Activated T-helper 1 cell treated with anti-CD3 and anti-CD28 coated beads, Interleukin-12 subunit alpha, Interleukin-12 subunit beta, Interleukin-2, Interleukin-4 antibody, amounts not matched to agents 30 ng/mL and 10 ng/mL and 1 ng/mL, durations not matched to agents 14 hours and 24 hours and 36 hours (primary cell): ENCODE measurements at regions of chr6 and their contacts with region 1.

Region 1: DNA sequence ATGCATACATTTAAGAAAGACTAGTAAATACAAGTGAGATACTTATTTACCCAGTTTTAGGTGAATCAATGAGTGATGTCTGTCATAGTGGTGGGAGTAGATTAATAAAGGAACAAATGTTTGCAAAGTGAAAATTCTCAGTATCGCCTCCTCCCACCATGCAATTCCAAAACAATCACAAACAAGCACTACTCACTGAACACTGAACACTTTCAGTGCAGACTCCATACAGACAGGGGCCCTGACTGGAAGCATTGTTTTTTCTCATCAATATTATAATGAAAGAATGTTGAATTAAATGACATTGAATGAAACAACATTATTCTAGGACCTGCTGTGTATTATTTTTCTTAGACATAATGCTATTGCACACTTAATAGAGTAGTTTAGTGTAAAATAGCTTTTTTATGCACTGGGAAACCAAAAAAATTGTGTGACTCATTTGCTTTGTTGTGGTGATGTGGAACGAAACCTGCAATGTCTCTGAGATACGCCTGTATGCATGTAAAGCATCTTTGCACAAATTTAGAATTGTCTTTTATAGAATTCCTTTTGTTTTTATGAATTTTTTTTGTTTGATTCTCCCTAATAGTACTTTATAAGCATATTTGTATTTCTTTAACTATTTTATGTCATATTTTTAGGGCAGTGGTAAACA is 317.5 kb downstream of the UTRN start:
- DNase-seq: peak; percentile 12
- H3K4me3 Mint-ChIP-seq: no peak overlapping the region
- H3K27ac Mint-ChIP-seq: peak overlapping the region; percentile 50
- H3K4me1 Mint-ChIP-seq: peaks cover 66% of the 10 kb centered on the region
- H3K27me3 Mint-ChIP-seq: no peaks in the 10 kb centered on the region

Region 2: DNA sequence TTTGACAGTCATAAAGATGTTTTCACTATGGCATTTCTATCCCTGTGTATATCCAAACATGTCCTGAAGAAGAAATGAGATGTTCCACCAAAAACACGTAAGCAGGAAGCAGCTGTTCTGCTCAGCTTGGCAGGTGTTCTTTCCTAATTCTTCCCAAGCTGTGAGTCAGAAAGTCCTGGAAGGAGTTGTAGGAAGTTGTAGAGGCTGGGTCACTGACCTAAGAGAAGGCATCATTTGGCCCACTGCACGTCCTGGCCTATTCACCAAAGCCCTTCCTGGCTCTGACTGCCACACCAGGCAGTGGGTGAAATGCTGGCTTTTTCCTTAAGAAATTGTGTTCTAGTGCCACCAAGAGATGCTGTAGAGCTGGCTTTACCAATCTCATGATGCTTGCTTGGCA is 412.1 kb before region 1 on chr6:
- intact Hi-C with region 1: no loop called
- DNase-seq: no peak
- H3K4me3 Mint-ChIP-seq: no peak overlapping the region
- H3K27ac Mint-ChIP-seq: no peak overlapping the region
- H3K4me1 Mint-ChIP-seq: peaks cover 12% of the 10 kb centered on the region
- H3K27me3 Mint-ChIP-seq: no peaks in the 10 kb centered on the region

Region 3: DNA sequence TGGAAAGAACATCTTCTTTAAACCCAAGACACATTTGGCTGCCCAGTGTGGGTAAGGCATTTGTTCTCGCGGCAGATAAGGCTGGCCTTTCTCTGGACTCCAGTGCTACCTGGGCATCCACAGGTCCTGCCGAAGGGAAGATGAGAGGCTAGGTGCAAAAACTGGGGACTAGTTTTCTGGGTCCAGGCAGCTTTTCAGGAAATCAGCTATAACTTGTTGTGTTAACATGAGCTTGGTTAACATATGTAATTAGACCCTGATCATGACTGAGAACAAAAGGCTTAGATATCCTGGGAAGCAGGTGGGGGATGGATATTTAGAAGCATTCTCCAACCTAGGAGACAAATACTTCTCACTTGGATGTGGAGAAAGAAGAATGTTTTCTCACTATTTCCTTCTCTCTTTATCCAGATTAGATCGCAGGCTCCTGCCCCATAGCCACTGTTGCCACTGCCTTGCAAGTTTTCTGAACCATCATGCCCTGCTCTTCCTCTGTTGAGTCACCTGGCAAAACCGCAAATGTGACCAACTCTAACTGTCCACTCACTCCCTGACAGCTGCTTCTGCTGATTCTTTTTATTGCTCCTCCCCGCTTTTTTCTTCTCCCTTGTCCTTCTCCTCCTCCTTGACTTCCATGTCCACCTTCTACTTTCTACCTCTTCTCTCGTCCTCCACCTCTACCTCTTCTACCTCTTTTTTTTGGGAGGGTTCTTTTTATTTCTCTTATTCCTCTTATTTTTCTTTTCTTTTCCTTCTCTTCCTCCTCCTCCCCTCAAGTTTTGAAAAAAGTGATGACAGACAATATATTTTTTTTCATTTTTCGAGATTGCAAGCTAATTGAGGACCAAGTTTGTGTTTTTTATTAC is 59.4 kb before region 1 on chr6:
- intact Hi-C with region 1: no loop called
- DNase-seq: no peak
- H3K4me3 Mint-ChIP-seq: no peak overlapping the region
- H3K27ac Mint-ChIP-seq: no peak overlapping the region
- H3K4me1 Mint-ChIP-seq: peaks cover 10% of the 10 kb centered on the region
- H3K27me3 Mint-ChIP-seq: no peaks in the 10 kb centered on the region

Region 4: GRCh38 chr6:144613859-144614258 is 11.2 kb after region 1 on chr6:
- intact Hi-C with region 1: loop called (anchors 1 kb)
- DNase-seq: no peak
- H3K4me3 Mint-ChIP-seq: no peak overlapping the region
- H3K27ac Mint-ChIP-seq: no peak overlapping the region
- H3K4me1 Mint-ChIP-seq: peaks cover 31% of the 10 kb centered on the region
- H3K27me3 Mint-ChIP-seq: peaks cover 3% of the 10 kb centered on the region

Region 5: GRCh38 chr6:144637541-144637940 is 34.9 kb after region 1 on chr6:
- intact Hi-C with region 1: no loop called
- DNase-seq: no peak
- H3K4me3 Mint-ChIP-seq: no peak overlapping the region
- H3K27ac Mint-ChIP-seq: no peak overlapping the region
- H3K4me1 Mint-ChIP-seq: no peaks in the 10 kb centered on the region
- H3K27me3 Mint-ChIP-seq: no peaks in the 10 kb centered on the region

Region 6: DNA sequence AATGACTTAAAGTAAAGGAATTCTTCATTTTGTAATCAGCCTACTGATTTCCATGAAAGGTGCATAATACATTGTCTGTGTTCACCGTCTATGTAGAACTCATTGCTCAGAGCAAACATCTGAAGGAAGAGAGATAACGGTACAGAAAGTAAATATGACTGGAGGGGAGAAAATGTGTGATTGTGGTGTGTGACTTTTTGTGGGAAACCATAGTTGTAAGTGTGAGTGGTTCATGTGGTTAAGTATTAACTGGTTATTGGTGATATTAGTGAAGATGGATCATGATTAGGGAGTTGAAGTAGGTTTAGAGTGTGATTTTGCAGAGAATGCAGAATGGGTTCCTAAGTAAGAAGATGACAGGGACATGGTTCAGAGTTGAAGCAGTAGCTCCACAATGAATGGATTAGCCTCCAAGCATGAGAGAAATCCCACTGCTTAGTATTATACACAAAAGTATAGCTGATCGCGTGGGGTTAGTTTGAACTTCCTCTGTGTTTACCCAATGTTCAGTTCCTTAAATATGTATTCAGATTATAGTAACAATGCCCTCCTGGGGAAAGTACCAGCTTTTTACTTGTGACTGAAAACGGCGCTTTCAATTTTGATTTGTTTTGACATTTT is 51.3 kb after region 1 on chr6:
- intact Hi-C with region 1: loop called (anchors 2 kb)
- DNase-seq: no peak
- H3K4me3 Mint-ChIP-seq: peak overlapping the region; percentile 4
- H3K27ac Mint-ChIP-seq: peak overlapping the region; percentile 35
- H3K4me1 Mint-ChIP-seq: peaks cover 31% of the 10 kb centered on the region
- H3K27me3 Mint-ChIP-seq: no peaks in the 10 kb centered on the region

Region 7: DNA sequence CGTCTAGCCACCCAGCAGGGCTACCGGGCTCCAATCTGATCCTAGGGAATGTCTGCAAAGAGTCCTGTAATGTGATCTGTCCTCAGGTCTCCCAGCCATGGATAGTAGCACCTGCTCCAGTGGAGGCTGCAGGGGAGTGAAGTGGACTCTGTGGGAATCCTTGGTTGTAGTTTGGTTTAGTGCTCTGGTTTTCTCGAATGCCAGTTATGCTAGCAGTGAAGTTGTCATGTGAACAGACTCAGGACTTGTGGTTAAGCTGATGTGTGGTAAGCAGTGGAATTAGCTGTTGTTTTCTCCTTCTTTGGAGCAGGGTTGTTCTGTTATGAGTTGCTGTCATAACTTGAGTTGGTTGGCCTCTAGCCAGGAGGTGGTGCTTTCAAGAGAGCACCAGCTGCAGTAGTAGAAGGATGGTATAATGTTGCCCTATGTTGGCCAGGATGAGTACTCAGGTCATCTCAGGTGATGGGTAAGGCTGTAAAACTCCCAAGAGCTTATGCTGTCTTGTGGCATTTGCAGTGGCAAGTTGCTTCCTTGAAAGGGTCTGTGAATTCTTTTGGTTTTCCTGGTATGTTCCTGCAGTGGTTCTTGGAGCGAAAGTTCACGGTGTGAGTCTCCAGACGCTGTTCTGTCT is 72.7 kb after region 1 on chr6:
- intact Hi-C with region 1: loop called (anchors 1 kb)
- DNase-seq: peak; percentile 34
- H3K4me3 Mint-ChIP-seq: peak overlapping the region; percentile 41
- H3K27ac Mint-ChIP-seq: peak overlapping the region; percentile 18
- H3K4me1 Mint-ChIP-seq: peaks cover 51% of the 10 kb centered on the region
- H3K27me3 Mint-ChIP-seq: no peaks in the 10 kb centered on the region

Region 8: DNA sequence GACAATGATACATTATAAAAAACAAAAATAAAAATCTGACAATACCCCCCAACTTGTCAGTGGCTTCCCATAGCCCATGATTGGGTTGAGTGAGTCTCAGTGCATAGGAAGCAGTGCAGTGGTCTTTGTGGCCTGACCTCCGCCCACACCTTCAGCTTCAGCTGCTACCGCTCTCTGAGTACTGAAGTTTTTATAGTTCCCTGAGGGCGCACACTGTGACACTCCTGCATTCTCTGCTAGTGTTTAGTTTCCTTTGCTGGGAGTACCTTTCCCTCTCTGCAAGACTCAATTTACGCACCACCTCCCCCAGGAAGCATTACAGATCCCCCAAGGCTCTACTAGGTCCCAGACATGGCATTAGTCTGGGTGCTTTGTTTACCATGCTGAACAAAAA is 123.5 kb after region 1 on chr6:
- intact Hi-C with region 1: loop called (anchors 5 kb)
- DNase-seq: no peak
- H3K4me3 Mint-ChIP-seq: no peak overlapping the region
- H3K27ac Mint-ChIP-seq: no peak overlapping the region
- H3K4me1 Mint-ChIP-seq: peaks cover 54% of the 10 kb centered on the region
- H3K27me3 Mint-ChIP-seq: no peaks in the 10 kb centered on the region

Region 9: DNA sequence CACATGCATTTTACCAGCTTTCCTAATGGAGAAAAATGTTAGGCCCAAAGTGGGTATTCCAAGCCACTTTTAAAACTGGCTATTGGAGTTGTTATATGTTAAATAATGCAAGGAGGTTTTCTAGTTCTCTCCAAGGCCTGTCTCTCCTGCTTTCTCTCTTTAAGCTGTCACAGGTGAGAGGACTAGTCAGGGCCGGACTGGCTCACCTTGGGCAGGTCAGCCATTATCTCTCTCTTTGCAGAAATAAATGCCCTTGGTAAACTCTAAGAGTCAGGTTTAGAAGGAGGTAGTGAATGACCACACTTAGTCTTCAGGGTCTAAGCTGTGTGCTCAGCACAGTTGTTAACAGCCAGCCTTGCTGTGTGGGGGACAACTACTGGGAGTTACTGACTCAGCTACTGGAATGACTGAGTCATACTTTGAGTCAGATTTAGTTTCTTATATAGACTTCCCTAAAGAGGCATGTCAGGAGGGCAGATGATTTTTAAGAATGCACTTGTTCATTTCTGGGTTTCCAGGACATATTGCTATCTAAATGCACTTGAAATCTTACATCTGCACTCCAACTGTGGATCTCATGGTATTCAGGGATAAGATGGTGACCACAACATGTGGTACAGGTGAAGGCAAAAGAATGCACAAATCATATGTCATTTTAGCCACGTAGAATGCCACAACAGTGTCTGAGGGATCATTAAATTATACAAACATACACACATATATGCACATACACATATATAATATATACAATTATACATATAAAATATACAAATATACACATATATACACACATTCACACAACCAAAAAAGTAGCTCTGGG is 413.3 kb after region 1 on chr6:
- intact Hi-C with region 1: loop called (anchors 1 kb)
- DNase-seq: peak; percentile 6
- H3K4me3 Mint-ChIP-seq: peak overlapping the region; percentile 16
- H3K27ac Mint-ChIP-seq: peak overlapping the region; percentile 45
- H3K4me1 Mint-ChIP-seq: peaks cover 27% of the 10 kb centered on the region
- H3K27me3 Mint-ChIP-seq: peaks cover 2% of the 10 kb centered on the region